ENCODE measurements at regions of chr5 and their contacts with region 1.

Region 1: DNA sequence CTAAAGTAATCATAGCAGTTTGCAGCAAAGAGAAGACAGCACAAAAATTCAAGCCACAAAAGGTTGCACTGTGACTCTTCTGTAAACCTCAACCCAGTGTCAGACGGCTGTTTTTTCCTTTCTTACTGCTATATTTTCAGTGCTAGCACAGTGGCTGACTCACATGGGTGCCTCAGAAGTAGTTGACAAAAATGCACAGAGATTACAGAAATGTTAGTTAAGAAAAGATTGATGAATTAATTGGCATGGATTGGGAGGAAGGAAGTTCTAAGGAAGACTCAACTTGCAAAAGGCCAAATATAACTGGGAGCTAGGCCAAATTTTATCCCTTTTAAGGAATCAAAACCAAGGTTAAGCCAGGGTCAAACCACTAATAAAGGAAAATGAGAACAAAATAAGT is 43.7 kb upstream of the ITGA1 start:
- DNase-seq: peak; percentile 53
- ATAC-seq: peak; percentile 97
- H3K4me3 Mint-ChIP-seq: no peak overlapping the region
- H3K27ac Mint-ChIP-seq: no peak overlapping the region
- H3K4me1 Mint-ChIP-seq: peaks cover 41% of the 10 kb centered on the region
- H3K27me3 Mint-ChIP-seq: no peaks in the 10 kb centered on the region

Region 2: DNA sequence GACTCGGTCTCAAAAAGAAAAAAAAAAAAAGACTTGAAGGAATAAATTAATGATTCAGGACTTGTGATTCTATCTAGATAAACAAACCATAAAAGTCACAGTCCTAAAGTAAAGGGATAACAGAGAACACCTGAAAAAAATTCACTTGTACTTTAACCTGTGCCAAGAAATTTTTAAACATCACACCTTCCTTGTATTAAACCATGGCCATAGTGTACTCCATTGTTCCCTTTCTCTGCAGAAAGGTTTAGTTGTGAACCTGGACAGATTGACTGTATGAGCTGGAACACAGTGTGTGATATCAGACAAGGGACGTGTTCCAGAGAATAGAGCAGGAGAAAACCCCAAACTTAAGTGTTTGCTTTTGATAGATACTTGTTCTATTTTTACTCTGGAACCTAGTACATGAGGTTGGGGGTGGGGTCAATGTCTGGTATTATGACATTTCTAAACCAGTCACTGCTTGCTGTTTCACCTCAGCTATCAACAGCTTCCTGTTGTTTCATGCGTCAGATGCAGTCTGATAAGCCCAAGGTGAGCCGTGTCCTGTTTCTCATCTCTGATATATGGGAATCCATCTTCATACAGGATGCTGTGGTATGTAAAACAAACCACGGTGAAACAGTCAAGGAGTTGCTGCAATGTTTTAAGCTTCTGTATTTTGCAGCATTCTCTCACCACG is 18.8 kb before region 1 on chr5:
- CTCF ChIA-PET with region 1: interaction called, 4 read pairs
- POLR2A ChIA-PET with region 1: no interaction called
- intact Hi-C with region 1: loop called in 1 of 2 experiments (anchors 1 kb)
- DNase-seq: peak; percentile 63
- ATAC-seq: peak; percentile 96
- H3K4me3 Mint-ChIP-seq: no peak overlapping the region
- H3K27ac Mint-ChIP-seq: peak overlapping the region; percentile 48
- H3K4me1 Mint-ChIP-seq: peaks cover 40% of the 10 kb centered on the region
- H3K27me3 Mint-ChIP-seq: no peaks in the 10 kb centered on the region

Measured in activated CD4-positive, alpha-beta T cell treated with anti-CD3 and anti-CD28 coated beads for 36 hours (primary cell).